Activated CD4-positive, alpha-beta memory T cell treated with anti-CD3 and anti-CD28 coated beads for 36 hours (primary cell): ENCODE measurements at regions of chr2 and their contacts with region 1.

Region 1: DNA sequence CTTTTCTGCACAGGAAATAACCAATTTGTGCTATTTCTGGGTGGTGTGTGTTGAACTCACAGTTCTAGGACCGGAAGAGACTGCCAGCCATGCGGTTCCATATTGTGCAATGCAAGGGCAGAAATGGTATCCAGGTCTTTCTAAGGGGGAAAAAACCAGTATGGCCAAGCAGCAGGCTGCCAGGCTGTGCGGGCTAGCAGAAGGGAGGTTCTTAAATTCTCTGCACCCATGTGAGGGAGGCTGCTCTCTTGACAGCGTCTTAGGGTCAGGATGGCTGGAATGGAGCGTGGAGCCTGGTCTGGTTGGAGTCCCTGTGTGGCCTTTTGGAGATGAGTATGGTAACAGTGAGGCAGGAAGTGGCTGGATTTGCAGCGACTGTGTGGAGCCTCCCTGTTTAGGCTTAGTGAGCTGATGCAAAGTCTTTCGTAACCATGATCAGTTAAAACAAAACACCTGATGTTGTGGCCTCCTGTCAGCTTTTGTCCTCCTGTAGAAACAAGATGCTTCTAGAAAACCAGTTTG is 52.6 kb downstream of the NCK2 start:
- DNase-seq: peak; percentile 68
- H3K4me3 Mint-ChIP-seq: peak overlapping the region; percentile 52
- H3K27ac Mint-ChIP-seq: peak overlapping the region; percentile 92
- H3K4me1 Mint-ChIP-seq: peaks cover 94% of the 10 kb centered on the region
- H3K27me3 Mint-ChIP-seq: no peaks in the 10 kb centered on the region

Region 2: DNA sequence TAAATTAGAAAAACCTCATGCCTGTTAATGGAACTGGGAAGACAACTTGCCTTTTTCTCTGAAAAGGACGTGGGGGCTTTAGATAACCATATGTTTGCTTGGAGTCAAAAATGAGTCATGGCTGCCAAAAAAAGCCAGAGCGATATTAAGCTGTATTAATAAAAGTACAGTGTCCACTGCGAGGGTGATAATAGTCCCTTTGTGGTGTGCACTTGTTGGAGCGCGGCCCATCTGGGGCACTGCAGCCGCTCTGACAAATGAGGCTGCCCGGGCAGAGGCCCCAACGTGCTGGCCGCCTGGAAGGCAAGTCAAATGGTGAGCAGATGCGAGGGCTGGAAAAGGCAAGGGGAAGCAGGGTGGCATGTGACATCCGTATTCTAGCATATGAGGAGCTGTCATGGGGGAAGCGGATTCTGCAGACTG is 156.0 kb before region 1 on chr2:
- CTCF ChIA-PET with region 1: no interaction called
- POLR2A ChIA-PET with region 1: no interaction called
- intact Hi-C with region 1: no loop called
- DNase-seq: no peak
- H3K4me3 Mint-ChIP-seq: no peak overlapping the region
- H3K27ac Mint-ChIP-seq: no peak overlapping the region
- H3K4me1 Mint-ChIP-seq: no peaks in the 10 kb centered on the region
- H3K27me3 Mint-ChIP-seq: no peaks in the 10 kb centered on the region

Region 3: DNA sequence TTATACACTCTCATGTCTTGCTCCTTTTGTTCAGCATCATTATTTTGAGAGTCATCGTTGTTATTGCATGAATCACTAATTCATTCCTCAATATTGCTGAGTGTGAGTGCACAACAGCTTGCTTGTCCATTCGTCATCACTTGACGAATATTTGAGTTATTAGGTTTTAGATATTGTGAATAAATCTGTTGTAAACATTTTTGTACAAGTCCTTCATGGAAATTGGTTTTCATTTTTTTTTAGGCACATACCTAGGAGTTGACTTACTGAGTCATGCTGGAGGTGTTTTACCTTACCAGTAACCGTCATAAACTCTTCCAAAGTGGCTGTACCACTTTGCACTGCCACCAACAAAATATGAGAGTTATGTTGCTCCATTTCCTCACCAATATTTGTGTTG is 136.9 kb before region 1 on chr2:
- CTCF ChIA-PET with region 1: no interaction called
- POLR2A ChIA-PET with region 1: no interaction called
- intact Hi-C with region 1: no loop called
- DNase-seq: no peak
- H3K4me3 Mint-ChIP-seq: no peak overlapping the region
- H3K27ac Mint-ChIP-seq: no peak overlapping the region
- H3K4me1 Mint-ChIP-seq: no peaks in the 10 kb centered on the region
- H3K27me3 Mint-ChIP-seq: peaks cover 2% of the 10 kb centered on the region

Region 4: DNA sequence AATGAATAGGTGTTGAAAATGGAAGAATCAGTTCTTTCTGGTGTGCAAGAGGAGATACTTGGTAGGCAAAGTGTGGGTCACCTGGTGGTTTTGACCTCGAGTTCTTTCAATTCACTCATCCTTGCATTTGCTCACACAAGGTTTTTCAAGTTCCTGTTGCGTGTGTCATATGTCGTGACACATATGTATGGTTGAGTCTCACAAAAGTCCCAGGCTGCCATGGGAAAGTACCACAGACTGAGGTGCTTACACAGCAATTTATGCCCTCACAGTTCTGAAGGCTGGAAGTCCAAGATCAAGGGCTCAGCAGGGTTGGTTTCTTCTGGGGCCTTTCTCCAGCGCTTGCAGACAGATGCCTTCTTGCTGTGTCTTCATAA is 11.7 kb after region 1 on chr2:
- CTCF ChIA-PET with region 1: interaction called, 5 read pairs
- POLR2A ChIA-PET with region 1: interaction called, 7 read pairs
- intact Hi-C with region 1: loop called (anchors 1 kb)
- DNase-seq: peak; percentile 75
- H3K4me3 Mint-ChIP-seq: no peak overlapping the region
- H3K27ac Mint-ChIP-seq: peak overlapping the region; percentile 92
- H3K4me1 Mint-ChIP-seq: peaks cover 93% of the 10 kb centered on the region
- H3K27me3 Mint-ChIP-seq: no peaks in the 10 kb centered on the region

Region 5: GRCh38 chr2:105843476-105844374 is 46.4 kb after region 1 on chr2:
- CTCF ChIA-PET with region 1: no interaction called
- POLR2A ChIA-PET with region 1: no interaction called
- intact Hi-C with region 1: no loop called
- DNase-seq: no peak
- H3K4me3 Mint-ChIP-seq: no peak overlapping the region
- H3K27ac Mint-ChIP-seq: no peak overlapping the region
- H3K4me1 Mint-ChIP-seq: peaks cover 83% of the 10 kb centered on the region
- H3K27me3 Mint-ChIP-seq: no peaks in the 10 kb centered on the region

Region 6: GRCh38 chr2:105873721-105874120 is 76.4 kb after region 1 on chr2:
- CTCF ChIA-PET with region 1: no interaction called
- POLR2A ChIA-PET with region 1: interaction called, 3 read pairs
- intact Hi-C with region 1: loop called (anchors 1 kb)
- DNase-seq: peak; percentile 89
- H3K4me3 Mint-ChIP-seq: peak overlapping the region; percentile 3
- H3K27ac Mint-ChIP-seq: peak overlapping the region; percentile 87
- H3K4me1 Mint-ChIP-seq: peaks cover 92% of the 10 kb centered on the region
- H3K27me3 Mint-ChIP-seq: no peaks in the 10 kb centered on the region

Region 7: DNA sequence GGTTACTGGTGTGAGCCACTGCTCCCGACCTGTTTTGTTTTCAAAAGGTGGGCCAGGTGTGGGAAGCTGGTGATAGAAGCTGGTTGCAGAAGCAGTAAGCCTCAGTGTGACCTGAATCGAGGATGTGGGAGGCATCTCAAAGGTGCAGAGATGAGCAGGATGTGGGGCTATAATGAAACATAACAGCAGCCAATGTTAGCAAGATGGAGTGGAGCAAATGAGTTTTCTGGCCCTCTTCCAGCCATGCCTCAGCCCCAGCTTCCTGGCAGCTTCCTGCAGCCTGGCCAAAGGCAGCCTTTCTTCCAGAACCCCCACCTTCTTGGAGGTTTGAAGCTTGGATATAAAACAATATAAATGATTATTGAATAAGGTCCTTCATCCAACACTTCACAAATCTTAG is 132.2 kb after region 1 on chr2:
- CTCF ChIA-PET with region 1: interaction called, 3 read pairs
- POLR2A ChIA-PET with region 1: no interaction called
- intact Hi-C with region 1: loop called (anchors 5 kb)
- DNase-seq: peak; percentile 76
- H3K4me3 Mint-ChIP-seq: no peak overlapping the region
- H3K27ac Mint-ChIP-seq: peak overlapping the region; percentile 74
- H3K4me1 Mint-ChIP-seq: peaks cover 45% of the 10 kb centered on the region
- H3K27me3 Mint-ChIP-seq: no peaks in the 10 kb centered on the region

Region 8: GRCh38 chr2:106098081-106098480 is 300.7 kb after region 1 on chr2:
- CTCF ChIA-PET with region 1: no interaction called
- POLR2A ChIA-PET with region 1: no interaction called
- intact Hi-C with region 1: loop called (anchors 2 kb)
- DNase-seq: peak; percentile 50
- H3K4me3 Mint-ChIP-seq: no peak overlapping the region
- H3K27ac Mint-ChIP-seq: no peak overlapping the region
- H3K4me1 Mint-ChIP-seq: peaks cover 36% of the 10 kb centered on the region
- H3K27me3 Mint-ChIP-seq: no peaks in the 10 kb centered on the region